Activated CD4-positive, alpha-beta T cell treated with anti-CD3 and anti-CD28 coated beads for 36 hours (primary cell): ENCODE measurements at regions of chr15 and their contacts with region 1.

Region 1: DNA sequence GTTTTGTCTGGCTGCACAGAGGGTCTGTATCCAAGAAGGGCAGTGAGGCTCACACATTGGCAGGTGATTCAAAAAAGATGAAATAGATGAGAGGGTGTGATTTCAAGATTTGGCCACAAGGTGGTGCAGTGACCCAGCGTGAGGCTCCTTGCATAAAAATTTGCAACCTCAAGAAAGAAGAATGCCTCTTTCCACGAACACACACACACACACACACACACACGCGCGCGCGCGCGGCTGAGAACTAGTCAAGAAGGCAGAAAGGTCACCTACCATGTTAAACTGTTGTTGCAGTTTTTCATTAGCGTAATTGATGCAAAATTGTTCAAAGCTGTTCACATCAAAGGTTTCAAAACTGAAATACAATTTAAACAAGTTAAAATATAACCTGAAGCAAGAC is 39.2 kb downstream of the MYO5C start:
- DNase-seq: peak; percentile 88
- ATAC-seq: peak; percentile 48
- H3K4me3 Mint-ChIP-seq: peak overlapping the region; percentile 53
- H3K27ac Mint-ChIP-seq: peak overlapping the region; percentile 70
- H3K4me1 Mint-ChIP-seq: peaks cover 31% of the 10 kb centered on the region
- H3K27me3 Mint-ChIP-seq: no peaks in the 10 kb centered on the region

Region 2: DNA sequence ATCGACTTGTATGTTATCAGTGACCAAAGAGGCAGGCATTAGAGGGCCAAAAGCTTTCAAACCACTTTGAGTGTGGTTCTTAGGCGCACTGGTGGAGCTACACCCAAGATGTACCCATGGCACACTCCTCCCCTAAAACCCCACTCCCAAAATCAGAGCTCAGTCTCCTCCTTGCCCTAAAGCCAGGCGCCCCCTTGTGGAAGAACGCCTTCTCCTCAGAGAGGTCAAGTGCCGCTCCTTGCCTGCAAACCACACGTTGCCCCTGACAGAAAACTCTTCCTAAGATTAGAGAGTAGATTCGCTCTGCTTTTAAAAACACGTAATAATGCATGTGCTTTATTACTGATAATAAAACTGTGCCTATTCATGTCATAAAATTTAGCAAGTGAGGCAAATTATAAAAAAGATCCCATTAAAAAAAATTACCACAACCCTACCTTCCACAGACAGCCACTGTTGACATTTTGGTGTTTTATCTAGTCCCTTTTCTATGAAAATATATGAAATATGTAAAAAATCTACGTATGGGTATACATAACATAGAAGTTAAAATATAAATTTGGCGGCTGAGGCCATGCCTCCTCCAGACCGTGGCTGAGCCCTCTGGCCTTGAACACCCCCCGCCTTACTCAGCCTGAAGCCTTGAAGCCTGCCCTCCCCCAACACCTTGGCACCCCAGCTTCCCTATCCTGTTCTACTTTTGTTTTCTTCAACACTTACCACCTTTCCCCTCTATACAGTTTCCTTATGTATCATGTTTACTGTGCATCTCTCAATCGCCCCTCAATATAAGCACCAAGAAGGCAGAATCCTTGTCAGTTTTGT is 177.3 kb before region 1 on chr15:
- CTCF ChIA-PET with region 1: no interaction called
- POLR2A ChIA-PET with region 1: no interaction called
- intact Hi-C with region 1: no loop called
- DNase-seq: peak; percentile 93
- ATAC-seq: peak; percentile 79
- H3K4me3 Mint-ChIP-seq: no peak overlapping the region
- H3K27ac Mint-ChIP-seq: no peak overlapping the region
- H3K4me1 Mint-ChIP-seq: peaks cover 15% of the 10 kb centered on the region
- H3K27me3 Mint-ChIP-seq: no peaks in the 10 kb centered on the region

Region 3: GRCh38 chr15:52227456-52227855 is 28.9 kb before region 1 on chr15:
- CTCF ChIA-PET with region 1: interaction called, 12 read pairs
- POLR2A ChIA-PET with region 1: no interaction called
- intact Hi-C with region 1: no loop called
- DNase-seq: peak; percentile 82
- ATAC-seq: peak; percentile 95
- H3K4me3 Mint-ChIP-seq: no peak overlapping the region
- H3K27ac Mint-ChIP-seq: no peak overlapping the region
- H3K4me1 Mint-ChIP-seq: peaks cover 13% of the 10 kb centered on the region
- H3K27me3 Mint-ChIP-seq: no peaks in the 10 kb centered on the region

Region 4: GRCh38 chr15:52309154-52309548 is 52.8 kb after region 1 on chr15:
- CTCF ChIA-PET with region 1: interaction called, 12 read pairs
- POLR2A ChIA-PET with region 1: no interaction called
- intact Hi-C with region 1: no loop called
- DNase-seq: no peak
- ATAC-seq: peak; percentile 36
- H3K4me3 Mint-ChIP-seq: no peak overlapping the region
- H3K27ac Mint-ChIP-seq: no peak overlapping the region
- H3K4me1 Mint-ChIP-seq: peaks cover 5% of the 10 kb centered on the region
- H3K27me3 Mint-ChIP-seq: no peaks in the 10 kb centered on the region

Region 5: DNA sequence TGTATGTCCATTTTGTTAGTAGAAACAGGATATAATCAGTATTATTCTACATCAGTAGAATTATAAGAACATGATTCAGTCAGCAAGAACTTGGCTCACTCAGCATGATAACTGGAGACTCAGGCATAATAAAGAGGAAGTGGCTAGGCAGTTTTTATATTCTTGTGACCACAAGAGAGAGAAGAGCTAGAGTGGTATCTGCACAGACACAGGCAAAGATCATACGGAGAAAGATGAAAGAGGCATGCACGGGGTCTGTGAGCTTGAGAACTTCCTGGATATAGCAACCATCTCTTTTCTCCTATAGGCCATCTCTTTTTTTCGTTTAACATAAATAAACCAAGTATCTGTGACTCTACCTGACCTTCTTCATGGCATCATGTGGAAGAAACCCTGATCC is 225.5 kb after region 1 on chr15:
- CTCF ChIA-PET with region 1: interaction called, 3 read pairs
- POLR2A ChIA-PET with region 1: no interaction called
- intact Hi-C with region 1: loop called in 1 of 2 experiments (anchors 5 kb)
- DNase-seq: peak; percentile 49
- ATAC-seq: peak; percentile 94
- H3K4me3 Mint-ChIP-seq: peak overlapping the region; percentile 0
- H3K27ac Mint-ChIP-seq: peak overlapping the region; percentile 84
- H3K4me1 Mint-ChIP-seq: peaks cover 70% of the 10 kb centered on the region
- H3K27me3 Mint-ChIP-seq: no peaks in the 10 kb centered on the region

Region 6: DNA sequence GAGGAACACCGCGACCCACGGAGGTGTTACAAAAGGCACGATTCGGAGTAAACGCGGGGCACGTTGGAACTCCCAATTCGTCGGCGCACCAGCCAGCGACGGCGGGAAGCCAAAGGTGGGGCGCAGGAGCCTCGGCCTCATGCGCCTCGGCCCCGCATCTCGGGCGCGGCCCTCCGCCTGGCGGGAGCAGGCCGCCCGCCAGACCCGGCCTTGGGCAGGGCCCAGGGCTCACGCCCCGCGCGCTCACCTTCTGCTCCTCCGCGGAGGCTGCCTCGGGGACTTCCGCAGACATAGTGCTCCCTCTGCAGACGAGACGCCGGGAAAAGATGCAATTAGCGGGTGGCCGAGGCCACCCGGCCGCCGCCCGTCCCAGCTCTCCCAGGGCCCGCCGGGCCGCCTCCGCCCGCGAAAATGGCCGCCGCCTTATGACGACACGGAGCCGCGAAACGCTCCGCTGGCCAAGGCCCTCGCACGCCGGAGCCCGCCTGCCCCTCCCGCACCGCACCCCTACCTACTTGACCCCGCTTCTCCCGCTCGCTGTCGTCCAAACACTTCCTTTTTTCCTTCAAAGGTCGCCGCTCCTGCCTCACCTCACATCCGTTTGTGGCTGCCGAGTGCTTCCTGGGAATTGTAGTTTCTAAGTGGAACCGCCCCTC is 312.4 kb after region 1 on chr15 and contains the start of gene ARPP19:
- CTCF ChIA-PET with region 1: no interaction called
- POLR2A ChIA-PET with region 1: no interaction called
- intact Hi-C with region 1: loop called in 1 of 2 experiments (anchors 2 kb)
- DNase-seq: peak; percentile 90
- ATAC-seq: peak; percentile 83
- H3K4me3 Mint-ChIP-seq: peak within 1 kb of the TSS; percentile 96
- H3K27ac Mint-ChIP-seq: peak within 1 kb of the TSS; percentile 97
- H3K4me1 Mint-ChIP-seq: peaks cover 27% of the 10 kb centered on the region
- H3K27me3 Mint-ChIP-seq: no peaks in the 10 kb centered on the region
- total RNA-seq, gene ARPP19: 141 to 185 TPM

Region 7: GRCh38 chr15:52735231-52736089 is 479.1 kb after region 1 on chr15:
- CTCF ChIA-PET with region 1: interaction called, 67 read pairs
- POLR2A ChIA-PET with region 1: no interaction called
- intact Hi-C with region 1: loop called (anchors 1 kb)
- DNase-seq: peak; percentile 77
- ATAC-seq: peak; percentile 91
- H3K4me3 Mint-ChIP-seq: no peak overlapping the region
- H3K27ac Mint-ChIP-seq: no peak overlapping the region
- H3K4me1 Mint-ChIP-seq: peaks cover 5% of the 10 kb centered on the region
- H3K27me3 Mint-ChIP-seq: no peaks in the 10 kb centered on the region